Activated T-helper 1 cell treated with anti-CD3 and anti-CD28 coated beads, Interleukin-12 subunit alpha, Interleukin-12 subunit beta, Interleukin-2, Interleukin-4 antibody, amounts not matched to agents 30 ng/mL and 10 ng/mL and 1 ng/mL, durations not matched to agents 14 hours and 24 hours and 36 hours (primary cell): ENCODE measurements at regions of chr12 and their contacts with region 1.

Region 1: GRCh38 chr12:47361389-47362021 is 281.7 kb upstream of the AMIGO2 start:
- DNase-seq: peak; percentile 52
- H3K4me3 Mint-ChIP-seq: peak overlapping the region; percentile 67
- H3K27ac Mint-ChIP-seq: peak overlapping the region; percentile 97
- H3K4me1 Mint-ChIP-seq: peaks cover 56% of the 10 kb centered on the region
- H3K27me3 Mint-ChIP-seq: no peaks in the 10 kb centered on the region

Region 2: GRCh38 chr12:47102845-47103651 is 258.5 kb before region 1 on chr12:
- intact Hi-C with region 1: no loop called
- DNase-seq: no peak
- H3K4me3 Mint-ChIP-seq: no peak overlapping the region
- H3K27ac Mint-ChIP-seq: no peak overlapping the region
- H3K4me1 Mint-ChIP-seq: no peaks in the 10 kb centered on the region
- H3K27me3 Mint-ChIP-seq: no peaks in the 10 kb centered on the region

Region 3: GRCh38 chr12:47184812-47185211 is 176.7 kb before region 1 on chr12:
- intact Hi-C with region 1: no loop called
- DNase-seq: no peak
- H3K4me3 Mint-ChIP-seq: no peak overlapping the region
- H3K27ac Mint-ChIP-seq: no peak overlapping the region
- H3K4me1 Mint-ChIP-seq: peaks cover 21% of the 10 kb centered on the region
- H3K27me3 Mint-ChIP-seq: no peaks in the 10 kb centered on the region

Region 4: DNA sequence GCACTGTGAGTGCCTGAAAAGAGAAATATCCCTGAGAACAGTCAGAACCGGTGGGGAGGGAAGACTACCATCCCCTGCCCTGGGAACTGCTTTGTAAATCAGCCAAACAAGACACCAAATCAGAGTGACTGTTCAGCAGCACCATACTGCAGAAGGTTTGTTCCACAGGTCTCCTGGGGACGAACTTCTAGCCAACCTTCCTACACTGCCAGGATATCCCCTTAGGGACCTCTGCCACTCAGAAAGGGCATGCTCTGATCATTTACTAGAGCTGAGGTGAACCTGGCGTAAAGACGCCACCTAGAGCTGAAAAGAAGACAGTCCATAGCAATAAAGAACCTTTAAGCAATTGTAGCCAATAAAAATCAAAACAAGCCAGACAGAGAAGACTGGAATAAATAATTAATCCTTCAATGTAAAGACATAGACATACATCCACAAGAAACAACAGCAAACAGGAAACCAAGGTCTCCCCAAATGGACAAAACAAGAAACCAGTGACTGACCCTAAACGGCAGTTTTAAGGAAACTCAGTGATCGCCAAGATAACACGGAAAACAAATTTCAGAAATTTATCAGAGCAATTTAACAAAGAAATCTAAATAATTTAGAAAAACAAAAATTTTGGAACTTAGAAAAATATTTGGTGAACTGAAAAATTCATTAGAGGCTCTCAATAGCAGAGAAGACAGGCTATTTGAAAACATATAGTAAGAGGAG is 53.7 kb before region 1 on chr12:
- intact Hi-C with region 1: loop called (anchors 5 kb)
- DNase-seq: peak; percentile 43
- H3K4me3 Mint-ChIP-seq: peak overlapping the region; percentile 91
- H3K27ac Mint-ChIP-seq: peak overlapping the region; percentile 87
- H3K4me1 Mint-ChIP-seq: peaks cover 69% of the 10 kb centered on the region
- H3K27me3 Mint-ChIP-seq: no peaks in the 10 kb centered on the region

Region 5: DNA sequence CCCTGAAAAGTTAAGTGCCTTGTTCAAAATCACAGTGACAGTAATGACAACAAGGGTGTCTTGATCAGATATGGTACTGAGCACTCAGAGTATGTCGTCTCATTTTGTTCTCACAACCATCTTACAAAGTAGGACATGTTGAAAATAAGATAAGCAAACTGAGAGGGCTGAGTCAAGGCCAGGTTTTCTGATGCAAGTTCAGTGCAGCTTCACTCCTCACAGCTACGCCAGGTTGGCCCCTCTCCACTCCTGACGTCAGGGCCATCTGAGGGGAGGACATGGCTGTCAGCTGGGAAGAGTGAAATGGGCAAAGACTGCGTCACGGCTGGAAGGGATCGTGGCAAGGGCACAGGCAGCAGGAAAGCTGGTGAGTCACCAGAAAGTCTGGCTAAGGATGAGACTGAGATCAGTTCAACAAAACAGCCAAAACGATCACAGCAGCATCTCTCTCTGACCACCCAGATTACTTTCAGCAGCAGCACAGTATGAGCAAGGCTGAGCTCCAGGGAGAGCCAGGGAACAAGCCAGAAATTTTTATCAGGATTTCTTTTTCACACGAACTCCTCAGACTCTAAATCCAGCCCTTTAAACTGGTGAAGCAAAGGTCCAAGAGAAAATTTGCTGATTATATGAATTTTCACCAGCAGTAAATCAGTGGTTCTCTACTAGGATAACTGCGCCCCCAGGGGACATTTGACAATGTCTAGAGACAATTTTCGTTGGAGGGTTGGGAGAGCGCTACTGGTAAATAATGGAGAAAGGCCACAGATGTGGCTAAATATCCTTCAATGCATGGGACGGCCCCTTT is 16.1 kb after region 1 on chr12:
- intact Hi-C with region 1: loop called (anchors 1 kb)
- DNase-seq: no peak
- H3K4me3 Mint-ChIP-seq: no peak overlapping the region
- H3K27ac Mint-ChIP-seq: peak overlapping the region; percentile 4
- H3K4me1 Mint-ChIP-seq: peaks cover 60% of the 10 kb centered on the region
- H3K27me3 Mint-ChIP-seq: no peaks in the 10 kb centered on the region

Region 6: DNA sequence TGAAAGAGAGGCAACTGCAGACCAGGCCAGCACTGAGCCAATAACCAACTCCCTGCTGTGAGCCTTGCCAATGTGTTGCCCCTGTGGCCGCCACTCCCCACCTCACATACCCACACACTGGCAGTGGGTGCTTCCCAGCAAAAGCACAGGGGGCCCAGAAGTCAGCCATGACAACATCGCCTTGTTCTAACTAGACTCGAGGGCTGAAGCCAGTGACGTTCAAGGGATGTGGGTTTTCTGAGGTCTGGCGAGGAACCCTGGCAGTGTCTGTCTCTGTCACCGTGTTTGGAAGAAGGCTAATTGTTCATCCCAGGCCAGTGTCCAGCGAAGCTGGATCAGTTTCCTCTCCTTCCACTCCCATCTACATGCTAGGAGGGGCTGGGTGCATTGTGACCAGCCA is 30.1 kb after region 1 on chr12:
- intact Hi-C with region 1: loop called (anchors 1 kb)
- DNase-seq: peak; percentile 44
- H3K4me3 Mint-ChIP-seq: peak overlapping the region; percentile 27
- H3K27ac Mint-ChIP-seq: peak overlapping the region; percentile 100
- H3K4me1 Mint-ChIP-seq: peaks cover 89% of the 10 kb centered on the region
- H3K27me3 Mint-ChIP-seq: no peaks in the 10 kb centered on the region